MCF 10A (cell line): ENCODE measurements at regions of chr7 and their contacts with region 1.

Region 1: DNA sequence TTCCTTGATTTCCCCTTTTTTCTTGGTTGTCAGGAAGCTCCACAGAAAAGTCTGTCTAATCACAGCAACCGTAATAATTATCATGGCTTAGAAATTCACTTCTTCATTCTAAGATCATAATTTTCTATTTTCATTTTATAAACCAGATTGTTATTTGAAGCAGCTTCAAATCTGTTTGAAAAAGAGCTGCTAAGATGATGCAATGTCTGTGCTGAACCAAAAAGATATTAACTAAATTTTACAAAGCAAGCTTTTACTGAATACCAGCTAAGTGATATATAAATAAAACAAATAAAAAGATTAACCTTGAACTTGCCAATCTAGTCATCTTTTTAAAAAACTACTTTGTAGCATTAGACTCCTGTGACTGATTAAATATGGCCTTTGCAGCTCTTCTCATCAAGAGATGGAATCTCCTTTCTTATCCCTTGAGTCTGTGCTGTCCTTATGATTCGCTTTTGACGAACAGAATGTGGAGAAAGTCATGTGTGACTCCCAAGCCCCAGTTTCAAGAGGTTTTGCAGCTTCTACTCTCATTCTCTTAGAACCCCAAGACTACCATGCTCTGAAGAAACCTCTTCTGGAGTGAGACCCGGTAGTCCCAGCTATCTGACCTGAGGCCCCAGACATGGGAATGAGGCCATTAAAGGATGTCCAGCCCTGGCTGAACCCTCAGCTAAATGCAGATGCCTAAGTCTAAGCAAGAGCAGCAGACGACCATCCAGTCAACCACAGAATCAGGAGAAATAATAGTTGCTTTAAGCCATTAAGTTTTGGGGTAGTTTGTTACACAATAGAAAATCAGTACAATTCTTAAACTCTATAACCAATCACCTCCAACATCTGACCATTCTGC is 14.4 kb downstream of the NAMPT start:
- DNase-seq: no peak
- H3K4me3 Mint-ChIP-seq: no peak overlapping the region
- H3K27ac Mint-ChIP-seq: peak overlapping the region; percentile 74
- H3K4me1 Mint-ChIP-seq: peaks cover 12% of the 10 kb centered on the region
- H3K27me3 Mint-ChIP-seq: no peaks in the 10 kb centered on the region
- CTCF ChIP-seq: no peak

Region 2: GRCh38 chr7:106155027-106155426 is 115.3 kb before region 1 on chr7:
- CTCF ChIA-PET with region 1: no interaction called
- POLR2A ChIA-PET with region 1: no interaction called
- intact Hi-C with region 1: no loop called
- DNase-seq: no peak
- H3K4me3 Mint-ChIP-seq: no peak overlapping the region
- H3K27ac Mint-ChIP-seq: no peak overlapping the region
- H3K4me1 Mint-ChIP-seq: no peaks in the 10 kb centered on the region
- H3K27me3 Mint-ChIP-seq: peaks cover 29% of the 10 kb centered on the region
- CTCF ChIP-seq: no peak

Region 3: GRCh38 chr7:106260136-106260561 is 10.2 kb before region 1 on chr7:
- CTCF ChIA-PET with region 1: interaction called, 7 read pairs
- POLR2A ChIA-PET with region 1: interaction called, 16 read pairs
- intact Hi-C with region 1: no loop called
- DNase-seq: no peak
- H3K4me3 Mint-ChIP-seq: no peak overlapping the region
- H3K27ac Mint-ChIP-seq: peak overlapping the region; percentile 49
- H3K4me1 Mint-ChIP-seq: peaks cover 17% of the 10 kb centered on the region
- H3K27me3 Mint-ChIP-seq: no peaks in the 10 kb centered on the region
- CTCF ChIP-seq: no peak

Region 4: DNA sequence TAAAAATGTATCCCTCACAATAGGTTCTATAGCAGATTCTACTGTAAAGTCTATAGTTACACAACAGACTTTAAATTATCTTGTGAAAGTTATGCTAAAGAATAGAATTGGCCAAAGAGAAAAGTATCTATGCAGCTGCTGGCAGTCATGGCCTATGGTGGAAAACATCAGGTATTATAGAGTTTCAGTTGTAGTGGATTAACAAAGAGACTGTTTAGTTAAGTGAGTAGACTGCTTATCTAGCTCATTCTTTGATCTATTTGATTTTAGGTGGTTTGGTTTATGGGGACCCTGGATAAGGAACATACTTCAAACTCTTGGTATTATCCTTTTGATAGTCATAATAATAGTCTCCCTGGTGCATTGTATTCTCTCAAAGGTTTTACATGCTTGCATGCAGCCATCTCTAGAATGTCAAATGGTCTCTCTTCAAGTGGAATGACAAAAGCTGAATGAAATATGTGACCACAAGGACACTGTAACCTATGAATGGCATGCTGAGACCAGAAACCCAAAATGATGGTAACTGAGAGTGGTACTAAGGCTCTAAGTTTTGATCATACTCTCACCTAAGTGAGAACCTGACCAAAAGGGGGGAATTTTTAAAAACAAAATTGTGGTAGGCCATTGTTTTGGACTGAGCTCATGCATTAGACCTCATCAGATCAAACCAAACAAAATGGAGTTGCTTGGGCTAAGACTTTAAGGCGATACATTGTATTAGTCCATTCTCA is 69.3 kb after region 1 on chr7:
- CTCF ChIA-PET with region 1: no interaction called
- POLR2A ChIA-PET with region 1: no interaction called
- intact Hi-C with region 1: no loop called
- DNase-seq: no peak
- H3K4me3 Mint-ChIP-seq: no peak overlapping the region
- H3K27ac Mint-ChIP-seq: no peak overlapping the region
- H3K4me1 Mint-ChIP-seq: no peaks in the 10 kb centered on the region
- H3K27me3 Mint-ChIP-seq: no peaks in the 10 kb centered on the region
- CTCF ChIP-seq: no peak

Region 5: GRCh38 chr7:107543338-107543993 is 1273.1 kb after region 1 on chr7:
- CTCF ChIA-PET with region 1: no interaction called
- POLR2A ChIA-PET with region 1: no interaction called
- intact Hi-C with region 1: no loop called
- DNase-seq: no peak
- H3K4me3 Mint-ChIP-seq: no peak overlapping the region
- H3K27ac Mint-ChIP-seq: no peak overlapping the region
- H3K4me1 Mint-ChIP-seq: peaks cover 6% of the 10 kb centered on the region
- H3K27me3 Mint-ChIP-seq: no peaks in the 10 kb centered on the region
- CTCF ChIP-seq: no peak